A549 (cell line): ENCODE measurements at regions of chr2 and their contacts with region 1.

Region 1: GRCh38 chr2:84925724-84926376 is 20.4 kb downstream of the TMSB10 start:
- DNase-seq: peak; percentile 94 to 100
- ATAC-seq: peak; percentile 88 to 89
- H3K4me3 ChIP-seq: peak overlapping the region; percentile 64
- H3K27ac ChIP-seq: peak overlapping the region; percentile 91 to 93
- H3K4me1 ChIP-seq: peaks cover 29% of the 10 kb centered on the region
- CTCF ChIP-seq: peak; percentile 100
- EP300 ChIP-seq: no peak
- POLR2A ChIP-seq: peak; percentile 42
- RAD21 ChIP-seq: peak; percentile 92 to 99

Region 2: GRCh38 chr2:84781942-84782716 is 143.7 kb before region 1 on chr2:
- CTCF ChIA-PET with region 1: no interaction called
- POLR2A ChIA-PET with region 1: no interaction called
- DNase-seq: no peak
- ATAC-seq: no peak
- H3K4me3 ChIP-seq: no peak overlapping the region
- H3K27ac ChIP-seq: no peak overlapping the region
- H3K4me1 ChIP-seq: no peaks in the 10 kb centered on the region
- CTCF ChIP-seq: no peak
- EP300 ChIP-seq: no peak
- POLR2A ChIP-seq: no peak
- RAD21 ChIP-seq: no peak

Region 3: DNA sequence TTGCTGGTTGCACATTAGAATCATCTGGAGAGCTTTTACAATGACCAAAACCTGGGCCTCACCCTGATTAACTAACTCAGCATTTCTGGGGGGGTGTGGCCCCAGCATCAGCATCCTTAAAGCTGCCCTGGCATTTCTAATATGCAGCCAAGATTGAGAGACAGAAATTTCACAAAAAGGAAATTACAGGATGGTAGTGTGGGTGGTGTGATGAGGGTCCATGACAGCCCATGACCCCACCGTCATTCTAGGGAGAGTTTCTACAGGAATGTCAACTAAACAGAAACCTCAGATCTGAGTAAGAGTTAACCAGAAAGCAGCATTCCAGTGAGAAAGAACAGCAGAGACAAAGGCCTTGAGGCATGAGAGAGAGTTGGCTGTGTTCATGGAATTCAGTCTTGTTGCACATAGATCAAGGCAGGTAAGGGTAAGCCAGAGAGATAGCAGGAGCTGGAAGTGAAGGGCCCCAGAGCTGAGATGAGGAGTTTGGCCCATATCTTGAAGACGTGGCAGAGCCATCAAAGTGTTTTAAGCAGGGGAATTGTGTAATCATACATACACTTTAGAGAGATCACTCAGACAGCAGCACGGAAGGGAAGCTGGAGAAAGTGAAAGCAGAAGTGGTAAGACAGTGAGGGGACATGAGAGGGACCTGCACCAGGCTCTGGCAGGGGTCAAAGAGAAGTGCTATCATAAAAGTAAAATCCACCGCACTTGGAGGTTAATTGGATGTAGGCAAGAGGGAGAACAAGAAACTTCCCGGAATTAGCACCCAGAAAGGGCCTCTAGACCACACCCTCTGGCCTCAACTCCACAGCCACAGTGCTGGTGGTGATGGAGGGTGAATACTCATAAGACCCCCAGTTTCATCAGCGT is 37.2 kb before region 1 on chr2:
- CTCF ChIA-PET with region 1: interaction called, 41 read pairs
- POLR2A ChIA-PET with region 1: no interaction called
- DNase-seq: no peak
- ATAC-seq: peak; percentile 60 to 64
- H3K4me3 ChIP-seq: no peak overlapping the region
- H3K27ac ChIP-seq: peak overlapping the region; percentile 2 to 65; a peak in 3 of 6 replicates
- H3K4me1 ChIP-seq: peaks cover 4% of the 10 kb centered on the region; the same call in 1 of the 3 replicates
- CTCF ChIP-seq: no peak
- EP300 ChIP-seq: no peak
- POLR2A ChIP-seq: no peak
- RAD21 ChIP-seq: no peak

Region 4: GRCh38 chr2:84912984-84913383 is 12.9 kb before region 1 on chr2:
- CTCF ChIA-PET with region 1: interaction called, 178 read pairs
- POLR2A ChIA-PET with region 1: interaction called, 131 read pairs
- DNase-seq: no peak
- ATAC-seq: no peak
- H3K4me3 ChIP-seq: no peak overlapping the region
- H3K27ac ChIP-seq: no peak overlapping the region
- H3K4me1 ChIP-seq: peaks cover 7% of the 10 kb centered on the region
- CTCF ChIP-seq: no peak
- EP300 ChIP-seq: no peak
- POLR2A ChIP-seq: no peak
- RAD21 ChIP-seq: no peak

Region 5: DNA sequence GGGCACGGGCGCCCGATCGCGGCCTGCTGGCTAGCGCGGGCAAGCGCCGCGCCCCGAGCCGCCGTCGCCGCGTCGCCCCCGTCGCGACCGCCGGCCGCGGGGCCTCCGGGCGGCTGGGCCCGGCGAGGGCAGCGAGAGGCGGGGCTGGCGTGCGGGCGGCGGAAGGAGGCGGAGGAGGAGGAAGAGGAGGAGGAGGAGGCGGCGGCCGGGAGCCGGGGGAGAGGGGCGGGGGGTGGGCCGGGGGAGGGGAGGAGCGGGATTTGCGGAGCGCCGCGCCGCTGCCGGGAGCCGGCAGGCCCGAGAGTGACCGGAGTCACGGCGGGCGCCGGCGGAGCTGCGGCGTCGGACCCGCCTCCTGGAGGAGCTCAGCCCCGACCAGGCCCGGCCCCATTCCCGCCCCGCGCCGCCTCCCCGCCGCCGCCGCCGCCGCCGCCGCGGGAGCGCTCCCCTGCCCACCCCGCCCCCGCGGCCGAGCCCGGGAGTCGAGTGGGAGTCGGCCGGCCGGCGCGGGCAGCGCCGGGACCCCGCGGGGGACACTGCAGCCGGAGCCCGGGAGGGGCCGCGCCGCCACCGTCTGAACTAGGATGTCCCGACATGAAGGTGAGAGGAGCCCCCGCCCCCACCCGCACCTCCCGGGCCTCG is 45.1 kb after region 1 on chr2 and contains the start of gene KCMF1:
- CTCF ChIA-PET with region 1: interaction called, 21 read pairs
- POLR2A ChIA-PET with region 1: interaction called, 18 read pairs
- DNase-seq: peak in 1 of 2 experiments; percentile 89
- ATAC-seq: peak; percentile 75 to 77
- H3K4me3 ChIP-seq: peak within 1 kb of the TSS; percentile 89
- H3K27ac ChIP-seq: peak within 1 kb of the TSS; percentile 97 to 98
- H3K4me1 ChIP-seq: peaks cover 42% of the 10 kb centered on the region
- CTCF ChIP-seq: no peak
- EP300 ChIP-seq: no peak
- POLR2A ChIP-seq: peak; percentile 40
- RAD21 ChIP-seq: no peak
- polyA plus RNA-seq, gene KCMF1: 194 and 221 TPM in 2 replicates

Region 6: DNA sequence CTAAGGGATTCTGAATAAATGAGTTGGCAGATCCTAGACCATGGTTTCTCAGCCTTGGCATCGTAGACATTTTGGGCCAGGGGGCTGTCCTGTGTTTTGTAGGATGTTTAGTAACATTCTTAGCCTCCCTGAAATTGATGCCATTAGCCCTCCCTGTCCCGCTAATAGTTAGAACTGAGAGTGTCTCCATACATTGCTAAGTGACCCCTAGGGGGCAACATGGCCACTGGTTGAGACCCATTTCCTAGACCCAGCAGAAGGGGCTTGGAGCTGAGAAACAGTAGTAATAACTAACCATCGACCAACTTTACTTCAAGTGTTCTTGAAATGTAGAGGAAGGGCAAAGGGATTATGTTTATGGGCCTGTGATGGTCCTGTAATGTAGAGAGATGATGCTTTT is 85.9 kb after region 1 on chr2:
- CTCF ChIA-PET with region 1: interaction called, 59 read pairs
- POLR2A ChIA-PET with region 1: interaction called, 7 read pairs
- DNase-seq: no peak
- ATAC-seq: peak in 1 of 2 experiments; percentile 64; a peak in 4 of 6 replicates
- H3K4me3 ChIP-seq: no peak overlapping the region
- H3K27ac ChIP-seq: no peak overlapping the region
- H3K4me1 ChIP-seq: peaks cover 68% of the 10 kb centered on the region
- CTCF ChIP-seq: no peak; the same call in 2 of the 3 replicates
- EP300 ChIP-seq: no peak
- POLR2A ChIP-seq: no peak
- RAD21 ChIP-seq: peak in 1 of 2 experiments; percentile 16; a peak in 1 of 5 replicates

Region 7: GRCh38 chr2:85066874-85067351 is 141.1 kb after region 1 on chr2:
- CTCF ChIA-PET with region 1: interaction called, 31 read pairs
- POLR2A ChIA-PET with region 1: no interaction called
- DNase-seq: peak; percentile 77 to 87
- ATAC-seq: peak; percentile 88 to 93
- H3K4me3 ChIP-seq: peak overlapping the region; percentile 21; the same call in 2 of the 3 replicates
- H3K27ac ChIP-seq: peak overlapping the region; percentile 45 to 68; a peak in 4 of 6 replicates
- H3K4me1 ChIP-seq: no peaks in the 10 kb centered on the region
- CTCF ChIP-seq: peak; percentile 97
- EP300 ChIP-seq: no peak
- POLR2A ChIP-seq: no peak
- RAD21 ChIP-seq: peak; percentile 94

Region 8: GRCh38 chr2:85213901-85214512 is 288.2 kb after region 1 on chr2:
- CTCF ChIA-PET with region 1: no interaction called
- POLR2A ChIA-PET with region 1: no interaction called
- DNase-seq: no peak
- ATAC-seq: no peak
- H3K4me3 ChIP-seq: no peak overlapping the region
- H3K27ac ChIP-seq: no peak overlapping the region
- H3K4me1 ChIP-seq: no peaks in the 10 kb centered on the region
- CTCF ChIP-seq: no peak
- EP300 ChIP-seq: no peak
- POLR2A ChIP-seq: no peak
- RAD21 ChIP-seq: no peak

Region 9: GRCh38 chr2:85302121-85302520 is 376.3 kb after region 1 on chr2:
- CTCF ChIA-PET with region 1: interaction called, 18 read pairs
- POLR2A ChIA-PET with region 1: no interaction called
- DNase-seq: no peak
- ATAC-seq: no peak; a peak in 1 of 6 replicates
- H3K4me3 ChIP-seq: no peak overlapping the region
- H3K27ac ChIP-seq: no peak overlapping the region
- H3K4me1 ChIP-seq: no peaks in the 10 kb centered on the region
- CTCF ChIP-seq: no peak
- EP300 ChIP-seq: no peak
- POLR2A ChIP-seq: no peak
- RAD21 ChIP-seq: no peak